A673 (cell line): ENCODE measurements at regions of chr14 and their contacts with region 1.

Region 1: GRCh38 chr14:34817768-34818167 is 57.4 kb downstream of the BAZ1A start:
- DNase-seq: no peak
- H3K4me3 ChIP-seq: no peak overlapping the region
- H3K27ac ChIP-seq: no peak overlapping the region
- H3K4me1 ChIP-seq: no peaks in the 10 kb centered on the region
- H3K27me3 ChIP-seq: no peaks in the 10 kb centered on the region
- CTCF ChIP-seq: no peak

Region 2: DNA sequence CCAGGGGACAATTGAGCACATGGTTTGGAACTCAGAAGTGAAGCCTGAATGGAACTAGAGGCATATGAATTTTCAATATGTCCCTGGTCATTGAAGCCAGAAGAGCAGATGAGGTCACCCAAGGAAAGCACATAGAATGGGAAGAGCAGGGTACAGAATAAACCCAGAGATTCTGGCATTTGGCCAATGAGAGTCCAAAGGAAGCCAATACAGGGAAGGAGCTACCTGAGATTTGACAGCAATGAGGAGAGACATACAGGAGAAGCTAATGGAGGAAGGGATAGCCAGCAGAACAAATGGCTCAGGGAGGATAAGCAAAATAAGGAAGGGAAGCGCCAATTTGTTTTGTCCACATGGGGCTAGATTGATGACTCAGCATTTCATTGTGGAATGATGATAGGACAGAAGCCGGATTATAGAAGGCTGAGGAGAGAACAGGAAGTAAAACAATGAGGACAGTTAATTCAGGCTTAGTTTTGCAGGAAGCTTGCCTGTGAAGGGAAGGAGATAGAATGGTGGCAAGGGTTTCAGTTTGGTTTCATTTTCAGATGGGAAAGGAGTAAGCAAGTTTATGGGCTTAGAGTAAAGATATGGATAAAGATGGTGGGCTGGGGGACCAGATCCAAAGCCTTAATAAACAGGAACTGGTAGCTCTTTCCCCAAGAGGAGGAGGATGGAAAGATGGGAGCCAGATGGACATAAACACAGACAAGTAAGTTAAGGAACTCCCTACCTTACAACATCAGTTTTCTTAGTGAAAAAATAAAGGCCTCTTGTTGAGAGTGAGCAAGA is 352.5 kb before region 1 on chr14:
- CTCF ChIA-PET with region 1: no interaction called
- POLR2A ChIA-PET with region 1: no interaction called
- intact Hi-C with region 1: no loop called
- DNase-seq: peak; percentile 91
- H3K4me3 ChIP-seq: peak overlapping the region; percentile 13
- H3K27ac ChIP-seq: peak overlapping the region; percentile 81
- H3K4me1 ChIP-seq: peaks cover 28% of the 10 kb centered on the region
- H3K27me3 ChIP-seq: no peaks in the 10 kb centered on the region
- CTCF ChIP-seq: no peak

Region 3: GRCh38 chr14:35121887-35122695 is 304.3 kb after region 1 on chr14 and contains the starts of genes PPP2R3C and PRORP:
- CTCF ChIA-PET with region 1: no interaction called
- POLR2A ChIA-PET with region 1: interaction called, 20 read pairs
- intact Hi-C with region 1: no loop called
- DNase-seq: peak; percentile 95
- H3K4me3 ChIP-seq: peak within 1 kb of the TSS; percentile 64
- H3K27ac ChIP-seq: peak within 1 kb of the TSS; percentile 98
- H3K4me1 ChIP-seq: peaks cover 11% of the 10 kb centered on the region
- H3K27me3 ChIP-seq: no peaks in the 10 kb centered on the region
- CTCF ChIP-seq: no peak
- total RNA-seq, gene PPP2R3C: 50.5 and 56.2 TPM in 2 replicates
- total RNA-seq, gene PRORP: 41.5 and 46.5 TPM in 2 replicates